PC-3 (cell line): ENCODE measurements at regions of chr1 and their contacts with region 1.

Region 1: GRCh38 chr1:147676290-147677053 is 6.1 kb upstream of the ACP6 start:
- DNase-seq: peak; percentile 95
- ATAC-seq: peak; percentile 93
- H3K4me3 ChIP-seq: peak overlapping the region; percentile 44
- H3K27ac ChIP-seq: peak overlapping the region; percentile 96
- H3K4me1 ChIP-seq: peaks cover 42% of the 10 kb centered on the region
- H3K27me3 ChIP-seq: no peaks in the 10 kb centered on the region
- CTCF ChIP-seq: no peak

Region 2: DNA sequence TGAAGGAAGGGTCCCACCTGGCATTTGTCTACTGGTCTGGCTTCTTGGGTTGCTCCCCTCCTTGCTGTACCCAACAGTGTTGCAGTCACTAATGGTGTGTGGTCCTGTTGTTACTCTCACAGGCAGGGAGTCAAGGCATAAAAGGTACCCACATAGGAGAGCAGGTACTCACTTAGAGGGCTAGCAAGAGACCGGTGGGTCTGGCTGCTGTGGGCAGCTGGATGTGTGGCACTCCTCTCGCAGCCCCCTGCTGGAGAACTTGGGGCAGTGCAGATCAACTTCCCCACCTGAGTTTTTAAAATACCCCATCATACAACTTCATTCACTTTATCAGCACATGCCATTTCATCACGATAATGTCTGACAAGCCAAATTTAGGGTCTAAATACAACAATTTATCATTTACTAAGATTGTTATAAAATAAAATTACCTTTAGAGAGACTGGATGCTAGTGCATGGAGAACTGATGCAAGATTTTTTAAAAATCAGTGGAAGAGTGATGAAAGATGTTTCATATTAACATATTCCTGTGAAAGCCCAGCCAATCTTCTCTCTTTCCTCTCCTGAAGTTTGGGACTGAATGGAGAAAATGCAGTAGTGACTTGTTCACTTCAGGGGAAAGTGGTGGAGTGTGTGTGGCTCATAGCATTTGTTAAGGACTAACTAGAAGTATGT is 48.9 kb before region 1 on chr1:
- CTCF ChIA-PET with region 1: no interaction called
- POLR2A ChIA-PET with region 1: no interaction called
- intact Hi-C with region 1: no loop called
- DNase-seq: peak; percentile 72
- ATAC-seq: peak; percentile 70
- H3K4me3 ChIP-seq: no peak overlapping the region
- H3K27ac ChIP-seq: no peak overlapping the region
- H3K4me1 ChIP-seq: no peaks in the 10 kb centered on the region
- H3K27me3 ChIP-seq: no peaks in the 10 kb centered on the region
- CTCF ChIP-seq: peak; percentile 97

Region 3: GRCh38 chr1:147700042-147701006 is 23.9 kb after region 1 on chr1:
- CTCF ChIA-PET with region 1: no interaction called
- POLR2A ChIA-PET with region 1: no interaction called
- intact Hi-C with region 1: loop called (anchors 2 kb)
- DNase-seq: peak; percentile 87
- ATAC-seq: peak; percentile 88
- H3K4me3 ChIP-seq: no peak overlapping the region
- H3K27ac ChIP-seq: no peak overlapping the region
- H3K4me1 ChIP-seq: peaks cover 6% of the 10 kb centered on the region
- H3K27me3 ChIP-seq: no peaks in the 10 kb centered on the region
- CTCF ChIP-seq: peak; percentile 99

Region 4: GRCh38 chr1:147717063-147717565 is 40.6 kb after region 1 on chr1:
- CTCF ChIA-PET with region 1: interaction called, 9 read pairs
- POLR2A ChIA-PET with region 1: interaction called, 4 read pairs
- intact Hi-C with region 1: loop called (anchors 1 kb)
- DNase-seq: peak; percentile 99
- ATAC-seq: peak; percentile 93
- H3K4me3 ChIP-seq: no peak overlapping the region
- H3K27ac ChIP-seq: peak overlapping the region; percentile 91
- H3K4me1 ChIP-seq: peaks cover 43% of the 10 kb centered on the region
- H3K27me3 ChIP-seq: no peaks in the 10 kb centered on the region
- CTCF ChIP-seq: no peak

Region 5: DNA sequence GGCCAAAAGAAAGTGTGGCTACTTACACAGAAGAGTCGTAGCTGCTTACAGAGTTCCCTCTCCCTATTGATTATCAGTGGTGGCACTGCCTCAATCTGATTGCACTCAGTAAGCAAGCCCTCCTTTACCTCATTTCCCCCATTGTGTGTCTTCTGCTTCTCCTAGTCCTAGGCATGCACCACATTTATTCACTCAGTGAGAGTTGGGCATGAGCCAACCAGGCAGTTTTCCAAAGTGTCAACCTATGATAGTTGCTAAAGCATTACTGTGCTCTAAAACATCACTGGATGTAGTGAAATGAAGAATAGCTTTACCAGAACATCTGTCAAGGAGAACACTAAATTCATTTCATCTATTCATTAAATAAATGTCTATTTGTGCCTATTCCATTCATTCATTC is 64.6 kb after region 1 on chr1:
- CTCF ChIA-PET with region 1: no interaction called
- POLR2A ChIA-PET with region 1: no interaction called
- intact Hi-C with region 1: no loop called
- DNase-seq: no peak
- ATAC-seq: no peak
- H3K4me3 ChIP-seq: no peak overlapping the region
- H3K27ac ChIP-seq: no peak overlapping the region
- H3K4me1 ChIP-seq: no peaks in the 10 kb centered on the region
- H3K27me3 ChIP-seq: no peaks in the 10 kb centered on the region
- CTCF ChIP-seq: no peak

Region 6: DNA sequence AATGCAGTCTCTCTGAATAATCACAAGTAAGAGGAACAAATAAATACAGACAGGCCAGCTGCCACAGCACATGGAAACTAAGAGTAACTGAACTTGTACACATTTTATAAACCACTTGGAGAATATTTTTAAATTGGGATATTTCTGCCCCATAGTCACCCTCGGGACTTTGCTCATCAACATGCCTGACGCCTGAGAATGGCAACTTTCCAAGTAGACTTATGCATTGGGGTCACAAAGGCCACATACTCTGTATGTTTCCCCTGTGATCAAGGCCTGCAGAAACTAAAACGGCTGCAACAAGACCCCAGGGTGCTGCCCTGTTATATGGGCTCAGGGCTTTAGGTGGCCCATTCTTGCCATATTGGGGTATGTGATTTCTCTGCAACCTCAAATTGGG is 122.3 kb after region 1 on chr1:
- CTCF ChIA-PET with region 1: no interaction called
- POLR2A ChIA-PET with region 1: no interaction called
- intact Hi-C with region 1: no loop called
- DNase-seq: no peak
- ATAC-seq: no peak
- H3K4me3 ChIP-seq: no peak overlapping the region
- H3K27ac ChIP-seq: no peak overlapping the region
- H3K4me1 ChIP-seq: peaks cover 8% of the 10 kb centered on the region; the same call in 1 of the 2 replicates
- H3K27me3 ChIP-seq: no peaks in the 10 kb centered on the region
- CTCF ChIP-seq: no peak

Region 7: GRCh38 chr1:147815498-147815897 is 139.0 kb after region 1 on chr1:
- CTCF ChIA-PET with region 1: no interaction called
- POLR2A ChIA-PET with region 1: no interaction called
- intact Hi-C with region 1: no loop called
- DNase-seq: peak; percentile 15
- ATAC-seq: no peak
- H3K4me3 ChIP-seq: no peak overlapping the region
- H3K27ac ChIP-seq: no peak overlapping the region
- H3K4me1 ChIP-seq: no peaks in the 10 kb centered on the region
- H3K27me3 ChIP-seq: no peaks in the 10 kb centered on the region
- CTCF ChIP-seq: peak; percentile 48